Activated T-helper 2 cell treated with anti-CD3 and anti-CD28 coated beads, Interferon-gamma antibody, Interleukin-2, Interleukin-4, amounts not matched to agents 10 μg/mL and 5 μg/mL and 100 μg/mL, durations not matched to agents 14 hours and 24 hours and 36 hours (primary cell): ENCODE measurements at regions of chr7 and their contacts with region 1.

Region 1: DNA sequence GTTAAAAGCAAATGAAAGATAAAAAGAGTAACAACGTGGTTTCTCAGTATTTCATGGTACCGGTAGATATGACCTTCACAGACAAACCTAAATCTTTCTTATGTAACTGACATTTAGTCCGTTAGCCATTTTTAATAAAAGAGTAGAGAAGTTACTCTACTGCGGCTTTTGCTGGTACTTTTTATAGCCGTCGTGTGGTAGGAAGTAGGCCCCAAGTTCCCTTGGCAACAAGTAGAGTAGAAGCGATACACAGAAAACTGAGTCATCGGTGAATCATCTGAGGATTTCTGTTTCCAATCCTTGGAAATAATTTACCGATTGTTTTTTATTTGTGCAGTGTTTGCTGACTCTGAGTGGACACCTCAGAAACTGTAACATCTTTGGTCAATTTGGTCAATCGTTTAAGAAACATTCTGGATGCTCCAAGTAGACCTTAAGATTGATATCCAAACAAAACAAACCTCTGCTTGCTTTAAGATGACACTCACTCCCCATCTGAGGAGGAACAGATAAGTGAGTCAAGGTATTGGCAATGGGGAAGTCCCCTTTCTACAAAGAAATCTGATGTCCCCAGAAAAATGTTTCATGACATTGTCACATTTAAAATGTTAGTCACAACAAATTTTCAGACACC is 63.9 kb upstream of the AHR start:
- DNase-seq: peak; percentile 67
- H3K4me3 Mint-ChIP-seq: peak overlapping the region; percentile 58
- H3K27ac Mint-ChIP-seq: peak overlapping the region; percentile 83
- H3K4me1 Mint-ChIP-seq: peaks cover 44% of the 10 kb centered on the region
- H3K27me3 Mint-ChIP-seq: peaks cover 3% of the 10 kb centered on the region

Region 2: DNA sequence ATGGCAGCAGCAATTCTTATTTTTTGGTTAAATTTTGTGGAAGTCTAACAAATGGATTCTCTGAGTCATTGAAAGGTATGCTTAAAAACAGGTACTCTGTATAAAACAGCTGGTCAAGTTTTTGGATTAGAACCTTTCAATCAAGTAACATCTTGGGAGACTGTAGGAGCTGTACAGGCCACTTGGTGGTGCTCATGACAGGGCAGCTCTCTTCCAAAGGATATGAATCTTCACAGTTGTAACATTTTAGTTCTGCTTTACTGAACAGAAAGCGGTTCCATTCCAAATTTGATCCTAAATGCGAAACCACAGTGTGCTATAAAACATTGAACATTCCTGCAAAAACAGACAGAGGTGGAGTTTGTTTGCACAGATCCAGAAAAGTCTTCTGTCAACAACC is 308.2 kb before region 1 on chr7:
- intact Hi-C with region 1: loop called (anchors 10 kb)
- DNase-seq: no peak
- H3K4me3 Mint-ChIP-seq: no peak overlapping the region
- H3K27ac Mint-ChIP-seq: peak overlapping the region; percentile 43
- H3K4me1 Mint-ChIP-seq: peaks cover 62% of the 10 kb centered on the region
- H3K27me3 Mint-ChIP-seq: no peaks in the 10 kb centered on the region

Region 3: DNA sequence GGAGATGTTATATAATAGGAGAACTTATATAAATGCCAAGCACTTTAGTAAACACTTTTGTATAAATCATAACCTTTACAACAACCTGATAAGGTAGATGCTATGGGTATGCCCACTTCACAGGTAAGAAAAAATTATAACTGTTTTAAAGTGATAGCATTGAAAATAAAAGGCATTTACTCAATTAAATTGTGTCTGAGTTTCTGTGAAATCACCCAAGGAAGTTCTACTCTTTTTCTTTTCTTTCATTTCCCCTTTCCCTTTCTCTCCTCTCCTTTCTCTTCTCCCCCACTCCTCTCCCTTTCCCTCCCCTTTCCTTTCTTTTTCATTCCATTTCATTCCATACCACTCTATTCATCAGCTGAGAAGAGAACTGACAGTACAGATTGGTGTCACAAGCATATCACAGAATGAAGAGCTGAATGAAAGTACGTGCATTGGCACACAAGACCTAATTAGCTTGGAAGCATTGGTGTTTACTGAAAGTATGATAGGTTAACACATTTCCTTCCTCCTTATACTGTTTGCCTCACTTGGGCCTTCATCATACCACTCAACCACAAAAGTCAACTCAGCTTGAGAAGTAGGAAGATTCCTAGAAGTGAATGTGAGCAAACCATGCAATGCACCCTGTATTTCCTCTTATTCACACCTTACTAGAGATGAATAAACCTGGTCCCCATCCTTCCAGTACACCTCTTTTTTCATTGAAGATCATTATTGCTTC is 234.8 kb before region 1 on chr7:
- intact Hi-C with region 1: loop called (anchors 1 kb)
- DNase-seq: peak; percentile 15
- H3K4me3 Mint-ChIP-seq: peak overlapping the region; percentile 53
- H3K27ac Mint-ChIP-seq: peak overlapping the region; percentile 77
- H3K4me1 Mint-ChIP-seq: peaks cover 33% of the 10 kb centered on the region
- H3K27me3 Mint-ChIP-seq: peaks cover 2% of the 10 kb centered on the region

Region 4: DNA sequence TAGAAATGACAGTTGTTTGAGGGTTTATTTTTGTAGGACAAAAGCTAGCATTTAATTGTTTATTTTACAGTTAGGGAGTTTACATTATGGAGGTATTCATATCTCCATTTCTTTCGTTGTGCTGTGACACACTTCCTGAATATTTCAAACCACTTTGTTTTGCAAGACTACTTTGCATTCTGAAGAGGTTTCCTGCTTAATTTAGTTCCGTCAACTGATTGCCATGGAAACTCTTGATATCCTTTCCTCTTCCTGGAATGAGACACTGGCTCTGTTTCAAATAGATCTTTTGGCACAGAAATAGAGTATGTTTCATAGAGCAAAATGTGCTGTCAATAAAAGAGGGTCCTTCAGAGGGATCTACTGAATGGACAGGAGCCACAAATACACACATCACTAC is 193.2 kb before region 1 on chr7:
- intact Hi-C with region 1: loop called (anchors 1 kb)
- DNase-seq: no peak
- H3K4me3 Mint-ChIP-seq: peak overlapping the region; percentile 13
- H3K27ac Mint-ChIP-seq: peak overlapping the region; percentile 57
- H3K4me1 Mint-ChIP-seq: peaks cover 53% of the 10 kb centered on the region
- H3K27me3 Mint-ChIP-seq: peaks cover 2% of the 10 kb centered on the region

Region 5: DNA sequence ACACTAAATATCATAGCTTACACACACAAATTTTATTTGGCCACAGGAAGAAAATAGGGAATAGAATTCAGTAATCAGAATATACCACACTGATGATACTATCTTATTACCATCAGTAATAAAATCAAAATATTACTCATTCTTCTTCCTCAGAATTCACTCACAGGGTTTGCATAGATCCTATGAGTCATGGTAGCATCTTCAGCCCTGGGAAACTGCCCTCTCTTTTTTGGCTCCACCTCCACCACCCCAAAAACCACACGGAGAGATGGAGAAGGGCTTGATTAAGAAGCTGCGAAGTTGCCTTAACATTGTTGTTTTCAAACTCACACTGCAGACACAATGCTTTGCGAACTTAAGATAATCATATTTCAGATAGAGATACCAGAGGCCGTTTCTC is 90.2 kb before region 1 on chr7:
- intact Hi-C with region 1: loop called (anchors 1 kb)
- DNase-seq: peak; percentile 70
- H3K4me3 Mint-ChIP-seq: peak overlapping the region; percentile 16
- H3K27ac Mint-ChIP-seq: peak overlapping the region; percentile 71
- H3K4me1 Mint-ChIP-seq: peaks cover 63% of the 10 kb centered on the region
- H3K27me3 Mint-ChIP-seq: no peaks in the 10 kb centered on the region

Region 6: DNA sequence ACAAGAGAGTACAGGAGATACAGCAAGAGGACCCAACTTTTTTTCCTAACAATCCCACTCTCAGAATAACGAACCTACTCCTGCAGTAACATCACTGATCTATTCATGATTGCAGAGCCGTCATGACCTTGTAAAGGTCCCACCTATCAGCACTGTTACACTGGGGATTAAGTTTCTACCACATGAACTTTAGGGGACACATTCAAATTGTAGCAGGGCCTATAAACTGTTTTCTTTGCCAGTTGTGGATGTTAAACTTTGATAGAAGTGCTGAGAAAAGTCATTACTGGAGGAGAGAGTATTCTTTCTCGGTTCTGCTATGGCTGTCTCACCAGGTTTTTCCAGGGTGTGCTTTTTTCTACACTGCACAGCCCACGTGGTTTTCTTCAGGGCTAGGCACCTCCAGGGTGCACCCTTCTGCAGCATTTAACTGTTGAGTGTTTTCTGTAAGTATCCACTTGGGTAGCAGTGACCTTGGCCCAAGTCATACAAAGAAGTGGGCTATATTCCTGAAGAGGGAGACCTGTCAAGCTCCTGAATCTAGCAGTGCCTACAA is 67.6 kb before region 1 on chr7:
- intact Hi-C with region 1: loop called (anchors 2 kb)
- DNase-seq: no peak
- H3K4me3 Mint-ChIP-seq: no peak overlapping the region
- H3K27ac Mint-ChIP-seq: peak overlapping the region; percentile 66
- H3K4me1 Mint-ChIP-seq: peaks cover 35% of the 10 kb centered on the region
- H3K27me3 Mint-ChIP-seq: no peaks in the 10 kb centered on the region

Region 7: DNA sequence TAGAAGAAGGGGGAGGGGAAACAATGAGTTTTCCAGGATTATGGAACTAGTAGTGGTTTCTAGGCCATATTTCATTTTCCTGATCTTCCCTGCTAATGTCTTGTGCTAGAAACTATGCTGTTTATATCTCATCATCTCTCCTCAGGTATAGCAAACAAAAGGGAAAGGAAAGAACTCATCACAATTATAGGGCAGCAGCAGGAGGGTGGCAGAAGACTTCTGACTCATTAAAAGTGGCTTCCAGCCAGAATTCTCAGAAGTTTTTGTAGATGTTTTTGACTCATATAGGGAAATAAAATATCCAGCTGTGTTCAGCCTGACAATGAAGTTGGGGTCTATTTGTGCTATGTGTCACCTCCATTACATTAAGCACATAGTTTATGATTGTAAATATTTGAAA is 70.4 kb after region 1 on chr7:
- intact Hi-C with region 1: loop called (anchors 1 kb)
- DNase-seq: no peak
- H3K4me3 Mint-ChIP-seq: peak overlapping the region; percentile 45
- H3K27ac Mint-ChIP-seq: peak overlapping the region; percentile 59
- H3K4me1 Mint-ChIP-seq: peaks cover 29% of the 10 kb centered on the region
- H3K27me3 Mint-ChIP-seq: no peaks in the 10 kb centered on the region

Region 8: DNA sequence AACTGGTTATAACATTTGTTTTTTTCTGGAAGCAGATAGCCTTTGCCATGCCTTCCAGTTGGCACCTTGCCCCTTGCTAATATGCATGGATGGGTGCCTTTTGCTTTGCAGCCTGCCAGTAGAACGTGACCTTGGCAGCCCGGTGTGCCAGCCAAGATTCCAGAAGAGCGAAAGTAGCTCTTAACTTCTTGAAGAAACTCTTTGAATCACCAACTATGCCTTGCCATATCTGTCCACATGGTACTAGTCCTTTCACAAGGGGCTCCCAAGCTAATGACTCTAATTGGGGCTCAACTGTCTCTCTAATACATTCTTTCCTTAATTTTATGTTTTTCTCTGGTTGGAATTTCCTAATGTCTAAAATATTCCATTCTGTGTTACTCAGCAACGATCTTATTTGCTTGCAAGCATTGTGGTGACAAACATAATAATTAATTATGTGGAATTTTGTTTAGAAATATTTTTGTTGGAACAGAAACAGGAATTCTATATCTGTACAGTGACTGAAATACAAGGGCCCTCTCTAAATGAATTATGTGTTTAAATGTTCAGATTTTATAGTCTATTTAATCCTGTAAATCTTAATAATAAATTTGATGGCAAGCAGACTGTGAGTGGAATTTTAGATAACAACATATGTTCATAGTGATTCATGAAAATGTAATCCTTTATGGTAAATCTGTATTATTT is 1306.8 kb after region 1 on chr7:
- intact Hi-C with region 1: no loop called
- DNase-seq: no peak
- H3K4me3 Mint-ChIP-seq: no peak overlapping the region
- H3K27ac Mint-ChIP-seq: no peak overlapping the region
- H3K4me1 Mint-ChIP-seq: peaks cover 5% of the 10 kb centered on the region
- H3K27me3 Mint-ChIP-seq: no peaks in the 10 kb centered on the region